ENCODE measurements at regions of chr11 and their contacts with region 1.

Region 1: GRCh38 chr11:62665075-62665598 is at the starts of genes C11orf98 and CSKMT:
- DNase-seq: peak; percentile 92
- H3K4me3 Mint-ChIP-seq: peak within 1 kb of the TSS; percentile 98
- H3K27ac Mint-ChIP-seq: peak within 1 kb of the TSS; percentile 91
- H3K4me1 Mint-ChIP-seq: peaks cover 5% of the 10 kb centered on the region
- H3K27me3 Mint-ChIP-seq: no peaks in the 10 kb centered on the region
- CTCF ChIP-seq: no peak
- total RNA-seq, gene C11orf98: 81.2 and 91.6 TPM in 2 replicates
- total RNA-seq, gene CSKMT: 15.4 and 31.2 TPM in 2 replicates

Region 2: GRCh38 chr11:62394825-62395538 is 270.2 kb before region 1 on chr11:
- CTCF ChIA-PET with region 1: interaction called, 4 read pairs
- POLR2A ChIA-PET with region 1: interaction called, 11 read pairs
- intact Hi-C with region 1: no loop called
- DNase-seq: peak; percentile 88
- H3K4me3 Mint-ChIP-seq: peak overlapping the region; percentile 73
- H3K27ac Mint-ChIP-seq: peak overlapping the region; percentile 29
- H3K4me1 Mint-ChIP-seq: peaks cover 11% of the 10 kb centered on the region
- H3K27me3 Mint-ChIP-seq: no peaks in the 10 kb centered on the region
- CTCF ChIP-seq: peak; percentile 76

Region 3: GRCh38 chr11:62601394-62602140 is 63.6 kb before region 1 on chr11 and contains the start of gene MTA2:
- CTCF ChIA-PET with region 1: no interaction called
- POLR2A ChIA-PET with region 1: interaction called, 47 read pairs
- intact Hi-C with region 1: no loop called
- DNase-seq: peak; percentile 98
- H3K4me3 Mint-ChIP-seq: peak within 1 kb of the TSS; percentile 86
- H3K27ac Mint-ChIP-seq: peak within 1 kb of the TSS; percentile 96
- H3K4me1 Mint-ChIP-seq: peaks cover 38% of the 10 kb centered on the region
- H3K27me3 Mint-ChIP-seq: no peaks in the 10 kb centered on the region
- CTCF ChIP-seq: no peak
- total RNA-seq, gene MTA2: 139 and 176 TPM in 2 replicates

Region 4: DNA sequence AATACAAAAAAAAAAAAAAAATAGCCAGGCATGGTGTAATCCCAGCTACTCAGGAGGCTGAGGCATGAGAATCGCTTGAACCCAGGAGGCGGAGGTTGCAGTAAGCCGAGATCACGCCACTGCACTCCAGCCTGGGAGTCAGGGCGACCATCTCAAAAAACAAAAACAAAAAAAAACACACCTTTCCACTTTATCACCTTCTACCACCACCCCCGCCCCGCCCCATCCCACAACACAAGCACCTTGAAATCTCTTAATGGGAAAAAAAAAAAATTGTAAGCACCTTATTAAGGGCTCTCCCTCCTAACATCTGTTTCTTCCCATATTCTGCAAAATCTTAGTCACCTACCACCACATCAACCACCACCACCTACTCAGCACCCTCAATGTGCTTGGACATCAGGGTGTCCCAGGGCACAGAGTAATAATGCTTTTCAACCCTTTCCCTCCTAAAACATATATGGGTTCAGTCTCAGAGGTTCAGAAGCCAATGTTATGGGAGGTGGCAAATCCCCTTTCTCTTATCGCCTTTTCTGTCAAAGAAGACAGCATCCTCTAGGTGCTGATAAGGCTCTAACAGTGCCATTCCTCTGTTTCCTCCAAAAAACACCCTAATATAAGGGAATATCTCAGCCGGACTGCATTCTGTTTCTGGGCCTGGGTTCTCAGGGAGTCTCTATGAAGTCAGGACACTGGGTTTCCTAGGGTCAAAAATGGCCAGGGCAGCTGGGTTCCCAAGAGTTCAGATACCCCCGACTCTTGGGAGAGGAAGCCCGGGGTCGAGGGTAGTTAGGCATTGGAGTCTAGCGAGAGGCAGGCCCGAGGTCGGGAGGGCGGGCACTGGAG is 12.8 kb before region 1 on chr11:
- CTCF ChIA-PET with region 1: interaction called, 7 read pairs
- POLR2A ChIA-PET with region 1: interaction called, 222 read pairs
- intact Hi-C with region 1: loop called (anchors 1 kb)
- DNase-seq: no peak
- H3K4me3 Mint-ChIP-seq: peak overlapping the region; percentile 93
- H3K27ac Mint-ChIP-seq: peak overlapping the region; percentile 96
- H3K4me1 Mint-ChIP-seq: peaks cover 14% of the 10 kb centered on the region
- H3K27me3 Mint-ChIP-seq: no peaks in the 10 kb centered on the region
- CTCF ChIP-seq: no peak

Region 5: DNA sequence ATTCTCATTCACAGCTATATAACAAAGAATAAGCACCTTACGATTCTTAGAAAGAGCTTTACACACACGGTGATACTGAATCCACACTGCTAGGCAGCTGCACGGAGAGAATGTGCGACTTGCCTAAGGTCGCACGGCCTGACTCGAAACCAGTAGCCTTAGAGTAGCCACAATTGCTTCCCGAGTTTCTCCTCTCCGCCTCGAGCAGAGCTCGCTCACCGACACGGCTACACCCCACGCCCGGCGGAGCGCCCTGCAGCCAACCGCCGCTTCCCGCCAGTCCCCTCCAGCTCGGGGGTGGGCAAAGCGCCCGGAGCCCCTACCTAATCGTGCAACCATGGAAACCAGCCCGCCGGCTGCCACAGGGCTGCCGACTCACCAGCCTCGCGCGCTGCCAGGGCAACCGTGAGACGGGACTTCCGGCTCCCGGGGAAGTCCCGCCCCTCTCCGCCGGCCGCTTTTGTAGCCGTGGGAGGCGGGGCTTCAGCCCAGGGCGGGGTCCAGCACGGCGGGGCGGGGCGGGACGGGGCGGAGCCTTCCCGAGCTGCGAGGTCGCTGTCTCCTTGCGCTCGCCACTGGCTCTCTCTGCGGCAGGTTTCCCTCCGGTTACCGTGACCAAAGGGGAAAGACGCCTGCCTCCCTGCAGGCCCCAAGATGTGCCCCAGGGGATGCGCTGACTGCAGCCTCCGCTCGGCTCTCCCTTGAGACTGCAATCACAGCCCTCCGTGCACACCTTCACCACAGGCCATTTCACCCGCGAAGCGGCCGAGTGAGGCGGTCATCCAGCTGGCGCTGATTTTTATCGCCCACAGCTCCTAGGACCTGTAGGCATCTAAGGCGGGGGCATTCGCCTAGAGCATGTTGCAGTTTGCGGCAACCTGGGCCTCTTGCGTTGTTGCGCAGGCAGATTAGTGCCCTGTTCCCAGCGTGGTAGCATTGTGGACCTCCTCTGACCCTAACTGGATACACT is 41.0 kb after region 1 on chr11:
- CTCF ChIA-PET with region 1: interaction called, 3 read pairs
- POLR2A ChIA-PET with region 1: interaction called, 17 read pairs
- intact Hi-C with region 1: no loop called
- DNase-seq: peak; percentile 91
- H3K4me3 Mint-ChIP-seq: peak overlapping the region; percentile 92
- H3K27ac Mint-ChIP-seq: peak overlapping the region; percentile 94
- H3K4me1 Mint-ChIP-seq: peaks cover 25% of the 10 kb centered on the region
- H3K27me3 Mint-ChIP-seq: no peaks in the 10 kb centered on the region
- CTCF ChIP-seq: no peak

Region 6: DNA sequence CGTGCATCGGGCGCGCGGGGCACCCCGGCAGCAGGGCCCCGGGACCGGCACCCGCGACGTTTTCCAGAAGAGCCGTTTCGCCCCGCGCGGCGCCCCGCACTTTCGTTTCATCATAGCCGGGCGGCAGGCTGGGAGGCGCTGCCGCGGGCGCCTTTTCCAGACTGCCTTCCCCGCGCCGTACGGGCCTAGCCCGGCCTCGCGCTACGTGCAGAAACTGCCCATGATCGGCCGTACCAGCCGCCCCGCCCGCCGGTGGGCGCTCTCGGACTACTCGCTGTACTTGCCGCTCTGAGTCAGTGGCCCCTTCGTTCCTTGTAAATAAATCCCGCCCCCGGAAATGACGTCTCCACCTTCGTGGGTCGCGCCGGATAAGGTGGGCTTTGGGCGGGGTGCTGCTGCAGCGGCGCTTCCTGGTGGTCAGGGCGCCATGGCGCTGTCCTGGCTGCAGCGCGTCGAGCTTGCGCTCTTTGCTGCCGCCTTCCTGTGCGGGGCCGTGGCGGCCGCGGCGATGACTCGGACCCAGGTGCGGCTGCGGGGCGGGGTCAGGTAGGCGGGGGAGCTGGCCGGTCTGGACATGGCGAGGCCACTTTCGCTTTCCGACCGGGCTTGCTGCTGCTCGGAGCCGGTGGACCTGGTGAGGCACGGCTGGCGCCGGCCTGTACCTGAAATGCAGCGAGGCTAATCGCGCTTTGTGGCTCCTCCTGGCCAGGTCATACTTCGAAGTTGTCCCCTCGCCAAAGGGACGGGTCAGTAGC is 122.0 kb after region 1 on chr11 and contains the start of gene TMEM179B:
- CTCF ChIA-PET with region 1: no interaction called
- POLR2A ChIA-PET with region 1: interaction called, 17 read pairs
- intact Hi-C with region 1: no loop called
- DNase-seq: peak; percentile 98
- H3K4me3 Mint-ChIP-seq: peak within 1 kb of the TSS; percentile 90
- H3K27ac Mint-ChIP-seq: peak within 1 kb of the TSS; percentile 93
- H3K4me1 Mint-ChIP-seq: peaks cover 15% of the 10 kb centered on the region
- H3K27me3 Mint-ChIP-seq: no peaks in the 10 kb centered on the region
- CTCF ChIP-seq: peak; percentile 40
- total RNA-seq, gene TMEM179B: 45.1 and 47.8 TPM in 2 replicates

Region 7: GRCh38 chr11:62880803-62881578 is 215.9 kb after region 1 on chr11 and contains the start of gene SLC3A2:
- CTCF ChIA-PET with region 1: interaction called, 4 read pairs
- POLR2A ChIA-PET with region 1: interaction called, 12 read pairs
- intact Hi-C with region 1: no loop called
- DNase-seq: peak; percentile 91
- H3K4me3 Mint-ChIP-seq: peak within 1 kb of the TSS; percentile 100
- H3K27ac Mint-ChIP-seq: peak within 1 kb of the TSS; percentile 99
- H3K4me1 Mint-ChIP-seq: peaks cover 47% of the 10 kb centered on the region
- H3K27me3 Mint-ChIP-seq: no peaks in the 10 kb centered on the region
- CTCF ChIP-seq: peak; percentile 70
- total RNA-seq, gene SLC3A2: 838 and 896 TPM in 2 replicates

Measured in MCF 10A (cell line).